Caco-2 (cell line): ENCODE measurements at regions of chr19 and their contacts with region 1.

Region 1: DNA sequence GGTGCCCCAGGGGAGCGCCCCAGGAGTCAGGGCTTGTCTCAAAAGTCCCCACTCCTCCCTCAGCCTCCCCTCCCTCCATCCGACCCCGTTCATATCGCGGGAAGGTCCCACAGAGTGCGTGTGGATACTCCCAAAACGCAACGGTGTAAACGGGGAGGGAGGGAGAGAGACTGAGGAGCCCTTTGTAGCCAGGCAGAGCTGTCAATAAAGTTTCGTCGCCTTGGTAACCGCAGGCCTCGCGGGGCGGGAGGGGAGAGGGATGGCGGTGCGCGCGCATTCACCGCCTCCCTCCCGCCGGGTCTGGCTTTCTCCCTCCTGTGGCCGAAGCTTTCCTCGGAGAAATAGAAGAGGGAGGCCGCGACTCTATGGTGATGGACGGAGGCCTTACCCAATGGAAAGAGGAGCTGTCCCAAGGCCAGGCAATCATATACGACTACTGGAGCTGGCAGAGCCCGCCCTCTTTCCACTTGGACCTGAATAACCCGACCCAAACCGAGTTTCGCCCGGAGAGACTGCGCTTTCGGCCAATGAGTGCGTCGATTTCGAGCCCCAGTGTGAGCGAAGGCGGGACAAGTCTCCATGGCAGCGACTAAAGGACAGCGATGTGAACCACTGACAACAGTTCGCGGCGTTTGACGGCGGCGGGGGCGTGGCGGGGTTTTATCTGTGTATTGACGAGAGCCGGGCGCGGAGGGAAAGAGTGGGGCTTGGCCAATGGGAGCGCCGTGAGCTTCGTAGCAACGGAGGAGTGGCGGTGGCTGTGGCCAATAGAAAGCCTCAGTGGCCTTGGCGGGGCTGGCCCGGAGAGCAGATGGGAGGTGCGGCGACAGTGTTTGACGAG is at the start of gene KMT5C:
- DNase-seq: peak; percentile 100
- H3K4me3 ChIP-seq: peak within 1 kb of the TSS; percentile 67
- H3K4me3 Mint-ChIP-seq: peak within 1 kb of the TSS; percentile 91
- H3K27ac Mint-ChIP-seq: peak within 1 kb of the TSS; percentile 95
- H3K4me1 ChIP-seq: peaks cover 10% of the 10 kb centered on the region; the same call in 1 of the 2 replicates
- H3K4me1 Mint-ChIP-seq: peaks cover 14% of the 10 kb centered on the region
- H3K27me3 ChIP-seq: no peaks in the 10 kb centered on the region
- H3K27me3 Mint-ChIP-seq: no peaks in the 10 kb centered on the region
- CTCF ChIP-seq: peak in 1 of 2 experiments; percentile 43
- total RNA-seq, gene KMT5C: 25.8 and 26.3 TPM in 2 replicates

Region 2: DNA sequence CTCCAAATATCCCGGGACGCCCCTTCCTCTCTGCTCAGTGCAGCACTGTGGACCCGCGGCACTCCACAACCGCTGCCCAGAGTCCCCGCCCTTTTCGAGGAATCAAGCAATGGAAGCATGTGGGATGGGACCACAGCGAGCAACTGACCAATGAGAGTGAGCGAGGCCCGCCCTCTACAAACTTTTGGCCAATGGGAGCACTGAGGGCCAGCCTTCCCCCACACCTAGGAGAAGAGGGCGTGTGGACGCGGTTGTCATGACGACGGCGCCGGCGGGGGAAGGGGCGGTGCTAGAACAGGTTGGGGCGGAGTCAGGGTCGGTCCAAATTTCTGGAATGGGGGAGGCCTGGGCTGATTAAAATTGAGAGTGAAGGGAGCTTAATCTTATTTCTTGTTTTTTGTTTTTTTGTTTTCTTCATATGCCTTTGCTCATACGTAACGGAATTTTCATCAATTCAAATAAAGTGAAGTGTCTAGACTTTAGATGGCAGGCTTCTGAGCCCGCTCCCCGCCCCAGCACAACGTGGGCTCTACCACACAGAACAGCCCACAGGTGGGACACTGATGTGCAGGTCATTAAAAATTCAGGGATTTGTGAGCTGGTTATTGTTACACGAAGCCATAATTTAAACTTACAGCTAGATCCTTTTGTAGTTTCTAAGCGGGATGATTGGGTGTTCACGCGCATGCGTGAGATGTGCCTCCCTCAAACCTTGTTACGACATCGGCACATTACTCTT is 172.6 kb before region 1 on chr19 and contains the start of gene DNAAF3:
- CTCF ChIA-PET with region 1: interaction called, 4 read pairs
- POLR2A ChIA-PET with region 1: interaction called, 4 read pairs
- intact Hi-C with region 1: loop called (anchors 1 kb)
- DNase-seq: peak; percentile 98 to 99
- H3K4me3 ChIP-seq: peak within 1 kb of the TSS; percentile 73
- H3K4me3 Mint-ChIP-seq: peak within 1 kb of the TSS; percentile 79
- H3K27ac Mint-ChIP-seq: peak within 1 kb of the TSS; percentile 80
- H3K4me1 ChIP-seq: no peaks in the 10 kb centered on the region
- H3K4me1 Mint-ChIP-seq: no peaks in the 10 kb centered on the region
- H3K27me3 ChIP-seq: no peaks in the 10 kb centered on the region
- H3K27me3 Mint-ChIP-seq: peaks cover 15% of the 10 kb centered on the region
- CTCF ChIP-seq: no peak
- total RNA-seq, gene DNAAF3: 0.45 and 0.91 TPM in 2 replicates

Region 3: GRCh38 chr19:55279770-55280643 is 59.3 kb before region 1 on chr19 and contains the start of gene HSPBP1:
- CTCF ChIA-PET with region 1: interaction called, 8 read pairs
- POLR2A ChIA-PET with region 1: interaction called, 29 read pairs
- intact Hi-C with region 1: loop called (anchors 1 kb)
- DNase-seq: peak; percentile 99
- H3K4me3 ChIP-seq: peak within 1 kb of the TSS; percentile 50
- H3K4me3 Mint-ChIP-seq: peak within 1 kb of the TSS; percentile 100
- H3K27ac Mint-ChIP-seq: peak within 1 kb of the TSS; percentile 100
- H3K4me1 ChIP-seq: peaks cover 17% of the 10 kb centered on the region
- H3K4me1 Mint-ChIP-seq: peaks cover 19% of the 10 kb centered on the region
- H3K27me3 ChIP-seq: no peaks in the 10 kb centered on the region
- H3K27me3 Mint-ChIP-seq: no peaks in the 10 kb centered on the region
- CTCF ChIP-seq: no peak
- total RNA-seq, gene HSPBP1: 69.6 and 71.4 TPM in 2 replicates

Region 4: DNA sequence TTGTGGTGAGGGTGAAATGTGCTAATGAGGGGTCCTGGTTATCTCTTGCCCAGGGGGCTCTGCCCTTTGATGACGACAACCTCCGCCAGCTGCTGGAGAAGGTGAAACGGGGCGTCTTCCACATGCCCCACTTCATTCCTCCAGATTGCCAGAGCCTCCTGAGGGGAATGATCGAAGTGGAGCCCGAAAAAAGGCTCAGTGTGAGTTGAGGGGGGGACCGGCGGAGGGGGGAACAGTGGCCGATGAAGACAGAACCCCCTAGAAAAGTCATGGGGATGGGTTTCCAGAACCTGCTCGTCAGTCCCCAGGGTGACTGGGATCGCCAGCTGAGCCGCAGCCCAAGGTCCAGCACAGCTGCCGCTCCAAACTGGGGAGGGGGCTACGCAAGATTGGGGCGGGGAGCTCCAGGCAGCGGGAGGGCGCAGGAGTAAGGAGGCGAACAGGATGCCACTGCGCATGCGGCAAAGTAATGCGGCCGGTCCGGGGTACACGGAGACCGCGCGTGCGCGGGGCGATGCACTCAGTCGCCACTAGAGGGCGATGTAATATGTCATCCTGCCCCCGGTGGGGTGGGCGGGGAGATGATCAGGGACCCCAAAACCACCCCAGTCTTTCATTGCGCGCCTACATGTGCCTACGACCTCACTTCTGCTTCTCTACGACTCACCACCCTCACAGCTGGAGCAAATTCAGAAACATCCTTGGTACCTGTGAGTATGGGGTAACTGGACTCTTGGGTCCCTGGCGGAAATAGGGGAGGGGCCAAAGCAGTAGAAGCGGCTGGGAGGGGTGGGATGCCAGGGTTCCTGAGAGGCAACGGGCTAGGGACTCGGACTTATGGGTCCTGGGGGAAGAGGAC is 37.6 kb before region 1 on chr19:
- CTCF ChIA-PET with region 1: interaction called, 30 read pairs
- POLR2A ChIA-PET with region 1: no interaction called
- intact Hi-C with region 1: loop called (anchors 1 kb)
- DNase-seq: peak; percentile 83 to 91
- H3K4me3 ChIP-seq: peak overlapping the region; percentile 9; the same call in 1 of the 2 replicates
- H3K4me3 Mint-ChIP-seq: peak overlapping the region; percentile 58
- H3K27ac Mint-ChIP-seq: no peak overlapping the region
- H3K4me1 ChIP-seq: 0 out of 2 replicates have a peak, but pooled peaks cover 3% of the 10 kb centered on the region
- H3K4me1 Mint-ChIP-seq: no peaks in the 10 kb centered on the region
- H3K27me3 ChIP-seq: no peaks in the 10 kb centered on the region
- H3K27me3 Mint-ChIP-seq: no peaks in the 10 kb centered on the region
- CTCF ChIP-seq: peak; percentile 89 to 99

Region 5: DNA sequence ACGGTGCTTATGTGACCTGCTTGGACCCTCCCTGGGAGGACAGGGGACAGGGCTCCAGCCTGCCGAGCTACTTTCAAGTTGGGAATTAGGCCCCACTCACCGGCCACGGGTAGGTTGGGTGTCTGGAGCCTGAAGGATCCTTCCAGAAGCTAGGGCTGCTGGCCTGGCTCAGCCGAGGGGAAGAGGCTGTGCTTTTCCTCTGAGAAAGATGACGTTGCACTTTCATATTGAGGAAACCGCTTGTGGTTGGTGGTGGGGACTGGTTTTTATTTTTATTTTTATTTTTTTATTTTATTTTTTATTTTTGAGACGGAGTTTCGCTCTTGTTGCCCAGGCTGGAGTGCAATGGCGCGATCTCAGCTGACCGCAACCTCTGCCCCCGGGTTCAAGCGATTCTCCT is 14.1 kb before region 1 on chr19 and contains the start of gene TMEM150B:
- CTCF ChIA-PET with region 1: interaction called, 20 read pairs
- POLR2A ChIA-PET with region 1: interaction called, 15 read pairs
- intact Hi-C with region 1: no loop called
- DNase-seq: no peak
- H3K4me3 ChIP-seq: no peak within 1 kb of the TSS
- H3K4me3 Mint-ChIP-seq: no peak within 1 kb of the TSS
- H3K27ac Mint-ChIP-seq: no peak within 1 kb of the TSS
- H3K4me1 ChIP-seq: peaks cover 30% of the 10 kb centered on the region
- H3K4me1 Mint-ChIP-seq: peaks cover 30% of the 10 kb centered on the region
- H3K27me3 ChIP-seq: no peaks in the 10 kb centered on the region
- H3K27me3 Mint-ChIP-seq: no peaks in the 10 kb centered on the region
- CTCF ChIP-seq: no peak
- total RNA-seq, gene TMEM150B: 1.6 and 3.4 TPM in 2 replicates

Region 6: DNA sequence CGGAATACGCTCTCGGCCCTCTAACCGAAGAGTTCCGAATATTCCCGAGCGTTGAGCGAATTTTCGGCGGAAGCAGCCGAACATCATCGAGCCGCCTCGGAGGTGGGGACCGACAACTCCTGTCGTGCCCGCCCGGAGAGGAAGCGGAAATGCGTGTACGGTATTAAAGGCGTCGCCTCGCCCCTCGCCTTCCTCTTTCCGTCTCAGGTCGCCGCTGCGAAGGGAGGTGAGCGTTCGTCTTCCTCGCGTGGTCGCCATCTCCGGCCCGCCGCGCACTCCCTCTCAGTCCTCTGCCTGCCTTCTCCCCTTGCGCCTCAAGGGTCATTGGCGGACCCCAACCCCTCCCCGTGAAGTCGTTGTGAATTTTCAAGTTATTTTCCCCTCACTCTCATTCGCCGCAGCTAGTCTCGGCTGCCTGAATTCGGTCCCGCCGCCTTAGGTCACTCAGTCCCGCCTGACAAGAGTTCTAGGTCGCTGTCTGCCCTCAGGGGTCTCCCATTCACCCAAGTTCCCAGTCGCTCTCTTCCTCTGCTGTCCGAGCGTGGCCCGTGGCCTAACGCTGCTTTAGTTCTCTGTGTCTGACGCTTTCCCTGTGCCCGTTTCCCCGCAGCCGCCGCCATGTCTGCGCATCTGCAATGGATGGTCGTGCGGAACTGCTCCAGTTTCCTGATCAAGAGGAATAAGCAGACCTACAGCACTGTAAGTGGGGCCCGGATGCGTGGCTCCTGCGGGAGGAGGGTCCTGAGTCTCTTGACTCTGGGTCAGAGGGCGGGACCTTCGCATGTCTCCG is 46.7 kb after region 1 on chr19 and contains the start of gene RPL28:
- CTCF ChIA-PET with region 1: interaction called, 18 read pairs
- POLR2A ChIA-PET with region 1: interaction called, 28 read pairs
- intact Hi-C with region 1: loop called (anchors 1 kb)
- DNase-seq: peak; percentile 98 to 99
- H3K4me3 ChIP-seq: peak within 1 kb of the TSS; percentile 95
- H3K4me3 Mint-ChIP-seq: peak within 1 kb of the TSS; percentile 93
- H3K27ac Mint-ChIP-seq: peak within 1 kb of the TSS; percentile 89
- H3K4me1 ChIP-seq: peaks cover 30% of the 10 kb centered on the region
- H3K4me1 Mint-ChIP-seq: peaks cover 18% of the 10 kb centered on the region
- H3K27me3 ChIP-seq: no peaks in the 10 kb centered on the region
- H3K27me3 Mint-ChIP-seq: no peaks in the 10 kb centered on the region
- CTCF ChIP-seq: no peak
- total RNA-seq, gene RPL28: 2,048 and 2,146 TPM in 2 replicates